Caco-2 (cell line): ENCODE measurements at regions of chrX and their contacts with region 1.

Region 1: GRCh38 chrX:15789979-15790768 is at the start of gene ZRSR2:
- DNase-seq: peak; percentile 74 to 81
- H3K4me3 ChIP-seq: peak within 1 kb of the TSS; percentile 87
- H3K4me3 Mint-ChIP-seq: no peak within 1 kb of the TSS
- H3K27ac Mint-ChIP-seq: no peak within 1 kb of the TSS
- H3K4me1 ChIP-seq: no peaks in the 10 kb centered on the region
- H3K4me1 Mint-ChIP-seq: no peaks in the 10 kb centered on the region
- H3K27me3 ChIP-seq: no peaks in the 10 kb centered on the region
- H3K27me3 Mint-ChIP-seq: no peaks in the 10 kb centered on the region
- CTCF ChIP-seq: no peak
- total RNA-seq, gene ZRSR2: 8.1 and 8.4 TPM in 2 replicates

Region 2: DNA sequence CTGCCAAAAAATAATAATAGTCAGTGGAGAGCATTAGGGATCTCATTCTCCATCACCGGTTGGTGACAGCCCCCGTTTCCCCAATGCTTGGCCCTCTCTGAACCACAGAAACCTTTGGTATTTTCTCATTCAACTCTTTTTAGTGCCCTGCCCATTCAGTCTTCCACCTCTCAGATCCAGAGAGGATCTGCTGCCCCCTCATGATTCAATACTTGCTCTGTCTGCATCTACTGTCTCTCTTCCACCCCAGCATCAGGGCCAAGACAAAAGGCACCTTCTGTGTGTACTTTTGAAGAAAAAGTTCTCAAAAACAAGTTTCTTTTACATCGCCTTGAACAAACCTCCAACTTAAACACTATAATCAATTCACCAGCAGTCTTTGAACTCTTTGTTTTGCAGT is 144.9 kb before region 1 on chrX:
- CTCF ChIA-PET with region 1: no interaction called
- POLR2A ChIA-PET with region 1: no interaction called
- intact Hi-C with region 1: no loop called
- DNase-seq: peak in 1 of 2 experiments; percentile 2
- H3K4me3 ChIP-seq: no peak overlapping the region
- H3K4me3 Mint-ChIP-seq: no peak overlapping the region
- H3K27ac Mint-ChIP-seq: no peak overlapping the region
- H3K4me1 ChIP-seq: no peaks in the 10 kb centered on the region
- H3K4me1 Mint-ChIP-seq: no peaks in the 10 kb centered on the region
- H3K27me3 ChIP-seq: no peaks in the 10 kb centered on the region
- H3K27me3 Mint-ChIP-seq: no peaks in the 10 kb centered on the region
- CTCF ChIP-seq: no peak

Region 3: DNA sequence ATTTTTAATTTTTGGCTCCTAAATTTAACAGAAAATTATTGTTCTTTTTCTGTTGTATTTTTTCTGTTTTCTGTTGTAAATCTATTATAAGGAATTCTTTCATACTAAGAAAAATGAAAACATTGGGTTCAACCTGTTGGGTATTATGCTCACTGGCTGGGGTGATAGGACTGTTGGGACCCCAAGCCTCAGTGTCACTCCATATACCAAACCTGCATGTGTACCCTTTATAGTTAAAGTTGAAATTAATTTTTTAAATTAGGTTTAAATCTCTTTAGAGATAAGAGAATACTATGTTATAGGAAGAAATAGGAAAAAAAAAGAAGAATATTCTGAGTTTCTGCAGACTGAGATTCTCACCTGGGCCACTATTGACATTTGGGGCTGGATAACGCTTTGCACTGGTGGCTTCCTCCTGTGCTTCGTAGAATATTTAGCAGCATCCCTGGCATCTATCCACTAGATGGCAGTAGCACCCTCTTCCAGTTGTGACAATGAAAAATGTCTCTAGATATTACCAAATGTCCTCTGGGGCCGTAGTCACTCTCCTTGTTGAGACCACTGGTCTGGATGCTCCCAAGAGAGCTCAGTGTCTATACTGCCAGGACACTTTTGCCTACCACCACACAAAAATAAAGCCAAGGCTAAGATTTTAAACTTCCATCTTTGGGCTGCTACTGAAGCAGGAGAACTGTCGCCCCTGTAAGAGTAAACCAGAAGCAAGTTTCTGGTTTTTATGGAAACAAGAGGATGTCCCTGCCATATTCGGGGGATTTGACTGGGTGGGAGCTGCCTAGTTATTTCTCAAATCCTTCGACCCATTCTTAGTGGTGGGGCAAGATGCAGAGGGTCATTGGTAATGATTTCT is 103.1 kb before region 1 on chrX:
- CTCF ChIA-PET with region 1: no interaction called
- POLR2A ChIA-PET with region 1: no interaction called
- intact Hi-C with region 1: loop called (anchors 5 kb)
- DNase-seq: peak; percentile 47 to 54
- H3K4me3 ChIP-seq: no peak overlapping the region
- H3K4me3 Mint-ChIP-seq: no peak overlapping the region
- H3K27ac Mint-ChIP-seq: no peak overlapping the region
- H3K4me1 ChIP-seq: no peaks in the 10 kb centered on the region
- H3K4me1 Mint-ChIP-seq: no peaks in the 10 kb centered on the region
- H3K27me3 ChIP-seq: no peaks in the 10 kb centered on the region
- H3K27me3 Mint-ChIP-seq: no peaks in the 10 kb centered on the region
- CTCF ChIP-seq: peak; percentile 48 to 61

Region 4: GRCh38 chrX:16418650-16419049 is 628.5 kb after region 1 on chrX:
- CTCF ChIA-PET with region 1: no interaction called
- POLR2A ChIA-PET with region 1: no interaction called
- intact Hi-C with region 1: no loop called
- DNase-seq: no peak
- H3K4me3 ChIP-seq: no peak overlapping the region
- H3K4me3 Mint-ChIP-seq: no peak overlapping the region
- H3K27ac Mint-ChIP-seq: no peak overlapping the region
- H3K4me1 ChIP-seq: no peaks in the 10 kb centered on the region
- H3K4me1 Mint-ChIP-seq: no peaks in the 10 kb centered on the region
- H3K27me3 ChIP-seq: no peaks in the 10 kb centered on the region
- H3K27me3 Mint-ChIP-seq: no peaks in the 10 kb centered on the region
- CTCF ChIP-seq: no peak